Heart right ventricle (tissue), 16 donors: ENCODE measurements at regions of chr1 and their contacts with region 1.

Region 1: DNA sequence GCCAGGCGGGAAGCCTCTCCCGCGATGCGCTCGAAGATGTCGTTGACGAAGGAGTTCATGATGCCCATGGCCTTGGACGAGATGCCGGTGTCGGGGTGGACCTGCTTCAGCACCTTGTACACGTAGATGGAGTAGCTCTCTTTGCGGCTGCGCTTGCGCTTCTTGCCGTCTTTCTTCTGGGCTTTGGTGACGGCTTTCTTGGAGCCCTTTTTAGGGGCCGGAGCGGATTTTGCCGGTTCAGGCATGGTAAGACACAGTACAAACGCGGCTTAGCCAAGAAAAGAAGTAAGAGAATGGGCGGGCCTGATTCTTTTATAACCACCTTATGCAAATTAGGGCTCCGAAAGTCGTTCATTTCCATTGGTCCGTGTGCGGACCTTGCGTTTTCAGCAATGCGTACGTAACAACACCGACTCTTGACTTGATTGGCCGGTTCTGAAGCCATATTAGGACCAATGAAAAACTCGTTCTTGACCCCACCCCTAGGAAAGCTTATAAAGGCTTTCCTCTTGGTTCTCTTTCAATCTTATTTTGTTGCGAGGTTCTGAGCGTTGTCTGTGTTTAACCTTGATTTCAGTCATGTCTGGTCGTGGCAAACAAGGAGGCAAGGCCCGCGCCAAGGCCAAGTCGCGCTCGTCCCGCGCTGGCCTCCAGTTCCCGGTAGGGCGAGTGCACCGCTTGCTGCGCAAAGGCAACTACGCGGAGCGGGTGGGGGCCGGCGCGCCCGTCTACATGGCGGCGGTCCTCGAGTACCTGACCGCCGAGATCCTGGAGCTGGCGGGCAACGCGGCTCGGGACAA is 12.8 kb upstream of the BOLA1 start:
- DNase-seq: peak; percentile 72 to 95
- ATAC-seq: peak; percentile 83 to 91 (median 88)
- H3K4me3 ChIP-seq: peak overlapping the region; percentile 55 to 95 (median 72)
- H3K27ac ChIP-seq: peak overlapping the region; percentile 89 to 100 (median 98)
- H3K4me1 ChIP-seq: peaks cover 0 to 35% (median 30%) of the 10 kb centered on the region in 9 donors
- H3K27me3 ChIP-seq: no peaks in the 10 kb centered on the region
- CTCF ChIP-seq: no peak

Region 2: GRCh38 chr1:149927503-149928387 is 41.1 kb after region 1 on chr1 and contains the start of gene SF3B4:
- intact Hi-C with region 1: loop called in 3 of 10 experiments (anchors 2 to 5 kb)
- DNase-seq: peak; percentile 95 to 97
- ATAC-seq: peak; percentile 97 to 100 (median 99)
- H3K4me3 ChIP-seq: peak within 1 kb of the TSS; percentile 69 to 98 (median 88)
- H3K27ac ChIP-seq: peak within 1 kb of the TSS; percentile 91 to 98 (median 96)
- H3K4me1 ChIP-seq: peaks cover 5 to 51% (median 33%) of the 10 kb centered on the region in 9 donors
- H3K27me3 ChIP-seq: no peaks in the 10 kb centered on the region
- CTCF ChIP-seq: peak in 2 of 9 donors; percentile 24 to 29
- total RNA-seq, gene SF3B4: 19.8 to 31.9 (median 26.2) TPM

Region 3: DNA sequence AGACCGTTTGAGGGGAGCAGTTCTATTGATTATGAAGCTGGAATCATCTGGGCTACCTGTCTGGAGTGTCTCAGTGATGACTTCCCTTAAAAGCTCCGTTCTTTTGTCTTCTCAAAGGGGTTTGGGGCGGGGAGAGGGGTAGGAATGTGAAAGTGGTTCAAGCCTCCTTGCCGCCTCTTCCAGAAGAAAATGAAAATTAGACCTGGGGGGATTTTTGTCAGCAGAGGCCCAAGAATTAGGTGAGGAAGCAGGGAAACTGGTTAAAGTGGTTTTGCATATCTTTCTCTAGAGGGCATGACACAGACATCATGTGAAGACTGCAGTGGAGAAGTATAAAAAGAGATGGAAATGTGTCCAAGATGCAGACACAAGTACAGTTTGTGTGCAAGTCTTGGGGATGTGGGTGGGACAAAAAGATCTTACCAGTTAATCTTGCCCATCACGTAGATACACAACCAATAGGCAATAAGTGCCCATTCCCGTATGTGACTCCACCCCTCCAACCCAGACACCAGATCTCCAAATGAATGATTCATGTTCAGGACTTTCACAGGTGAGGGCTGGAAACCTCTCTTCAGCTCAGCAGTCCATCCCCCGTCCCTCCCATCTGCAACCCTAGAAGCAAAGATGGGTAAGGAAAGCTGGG is 50.6 kb after region 1 on chr1:
- intact Hi-C with region 1: loop called in 1 of 10 experiments (anchors 2 kb)
- DNase-seq: no peak
- ATAC-seq: no peak
- H3K4me3 ChIP-seq: peak overlapping the region in 9 of 10 donors; percentile 35 to 63 (median 49)
- H3K27ac ChIP-seq: peak overlapping the region in 6 of 10 donors; percentile 19 to 84 (median 74)
- H3K4me1 ChIP-seq: peaks cover 0 to 59% (median 40%) of the 10 kb centered on the region in 9 donors
- H3K27me3 ChIP-seq: no peaks in the 10 kb centered on the region
- CTCF ChIP-seq: no peak